ENCODE measurements at regions of chr2 and their contacts with region 1.

Region 1: GRCh38 chr2:181077128-181077709 is 96.8 kb downstream of the UBE2E3 start:
- DNase-seq: peak; percentile 52
- H3K4me3 ChIP-seq: no peak overlapping the region
- H3K27ac ChIP-seq: no peak overlapping the region
- H3K4me1 ChIP-seq: peaks cover 23% of the 10 kb centered on the region
- H3K27me3 ChIP-seq: no peaks in the 10 kb centered on the region
- CTCF ChIP-seq: peak; percentile 65 to 71

Region 2: DNA sequence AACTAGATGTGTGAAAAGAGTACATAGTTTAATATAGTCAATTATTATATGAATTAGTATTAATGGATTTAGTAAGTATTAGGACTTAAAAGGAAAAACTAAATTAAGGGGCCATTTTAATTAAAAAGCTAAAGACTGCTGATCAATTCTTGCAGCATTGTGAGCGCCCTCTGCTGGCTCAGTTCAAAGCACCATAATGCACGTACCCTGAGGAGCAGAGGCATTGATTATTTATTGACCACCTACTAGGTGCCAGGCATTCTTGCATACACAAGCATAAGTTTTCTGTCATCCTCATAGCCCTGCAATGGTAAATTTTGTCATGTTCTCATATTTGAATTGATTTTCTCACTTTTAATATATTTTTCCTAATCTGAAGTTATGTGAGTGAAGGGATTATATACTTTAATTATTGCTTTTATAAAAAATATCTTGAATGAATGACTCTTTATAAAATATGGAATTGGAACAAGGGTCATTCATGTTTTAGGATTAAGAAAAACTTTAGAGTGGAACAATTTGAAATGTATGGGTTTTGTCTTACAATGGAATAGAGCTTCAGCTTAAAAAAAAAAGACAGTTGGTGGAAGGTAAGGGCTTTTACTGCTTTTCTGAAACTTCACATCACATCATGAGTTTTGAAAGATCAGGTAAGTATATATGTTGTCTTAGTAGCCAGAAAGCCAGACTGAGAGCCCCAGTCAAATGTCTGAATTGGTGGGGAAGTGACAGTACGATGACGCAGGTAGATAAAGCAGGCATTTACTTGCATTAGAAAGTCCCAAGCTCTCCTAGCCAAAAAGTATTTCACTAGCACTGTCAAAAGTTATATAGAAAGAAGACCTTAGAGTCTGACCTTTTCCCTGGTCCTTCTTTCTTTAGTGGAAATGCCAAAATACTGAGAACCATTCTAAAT is 389.7 kb after region 1 on chr2:
- CTCF ChIA-PET with region 1: no interaction called
- dilution Hi-C with region 1: loop called (anchors 25 kb)
- in situ Hi-C with region 1: no loop called
- intact Hi-C with region 1: loop called (anchors 1 kb)
- DNase-seq: peak; percentile 25
- H3K4me3 ChIP-seq: no peak overlapping the region
- H3K27ac ChIP-seq: peak overlapping the region; percentile 66
- H3K4me1 ChIP-seq: peaks cover 10% of the 10 kb centered on the region
- H3K27me3 ChIP-seq: no peaks in the 10 kb centered on the region
- CTCF ChIP-seq: peak; percentile 84 to 85